Left cardiac atrium (tissue), 4 donors: ENCODE measurements at regions of chr2 and their contacts with region 1.

Region 1: DNA sequence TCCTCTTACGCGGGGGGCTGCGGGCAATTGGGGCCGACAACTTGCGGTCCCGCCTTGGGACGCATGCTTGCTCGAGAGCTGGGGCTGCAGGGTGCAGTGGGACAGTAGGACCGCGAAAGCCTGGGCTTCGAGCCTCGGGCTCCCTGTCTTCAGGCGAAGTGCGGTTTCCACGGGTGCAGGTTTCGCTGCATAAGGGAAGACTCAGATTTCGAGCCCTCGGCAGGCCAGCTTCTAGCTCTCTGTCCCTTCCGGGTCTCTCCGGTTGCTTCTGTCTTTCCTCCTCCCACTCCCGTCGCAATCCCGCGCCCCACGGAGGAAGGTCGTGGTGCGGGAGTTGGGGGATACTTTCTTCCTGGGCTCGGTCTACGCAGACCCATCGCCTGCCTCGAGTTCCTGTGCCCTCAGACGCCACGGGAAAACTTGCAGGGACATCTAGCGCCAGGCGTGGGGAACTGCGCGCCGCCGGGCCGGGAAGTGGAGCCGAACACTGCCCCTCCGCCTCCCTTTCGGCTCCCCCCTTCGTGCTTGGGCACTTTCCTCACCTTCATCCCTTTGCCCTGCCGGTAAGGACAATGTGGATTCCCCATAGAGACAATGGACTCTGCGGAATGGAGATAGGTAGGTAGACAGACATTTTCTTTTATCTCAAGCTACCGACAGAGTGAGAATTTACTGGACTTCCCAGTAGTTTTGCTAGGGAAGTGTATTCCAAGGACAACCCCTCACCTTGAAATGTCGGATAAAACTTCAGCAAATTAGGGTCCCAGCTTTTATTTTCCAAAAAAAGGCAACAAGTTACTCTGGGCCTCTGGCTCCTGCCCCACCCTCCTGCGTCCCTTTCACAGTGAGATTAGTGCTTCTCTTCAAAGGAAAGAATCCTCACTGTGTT is 4.2 kb upstream of the HOXD13 start:
- DNase-seq: peak; percentile 57
- ATAC-seq: peak; percentile 81 to 86

Region 2: DNA sequence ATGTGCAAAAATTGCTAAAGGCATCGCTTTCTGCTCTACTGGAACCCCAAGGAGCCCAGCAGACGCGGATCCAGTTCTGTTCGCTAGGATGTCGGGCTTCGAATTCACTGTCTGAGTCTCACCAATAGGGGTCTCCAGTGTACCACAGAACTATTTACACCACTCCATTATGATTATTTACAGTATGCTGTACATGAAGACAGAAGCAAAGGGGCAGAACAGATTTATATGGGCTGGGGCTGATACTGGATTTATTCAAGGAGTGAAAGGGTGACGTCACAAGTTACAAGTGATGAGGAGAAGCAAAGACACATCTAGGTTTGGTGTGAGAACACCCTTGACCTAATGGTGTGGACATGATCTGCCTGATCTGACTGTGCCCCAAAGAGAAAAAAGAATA is 721.5 kb before region 1 on chr2:
- intact Hi-C with region 1: loop called (anchors 5 to 10 kb)
- DNase-seq: no peak
- ATAC-seq: peak; percentile 53 to 55

Region 3: GRCh38 chr2:175414882-175415487 is 673.3 kb before region 1 on chr2:
- intact Hi-C with region 1: loop called in 1 of 2 experiments (anchors 5 kb)
- DNase-seq: peak; percentile 57
- ATAC-seq: peak; percentile 41 to 71

Region 4: DNA sequence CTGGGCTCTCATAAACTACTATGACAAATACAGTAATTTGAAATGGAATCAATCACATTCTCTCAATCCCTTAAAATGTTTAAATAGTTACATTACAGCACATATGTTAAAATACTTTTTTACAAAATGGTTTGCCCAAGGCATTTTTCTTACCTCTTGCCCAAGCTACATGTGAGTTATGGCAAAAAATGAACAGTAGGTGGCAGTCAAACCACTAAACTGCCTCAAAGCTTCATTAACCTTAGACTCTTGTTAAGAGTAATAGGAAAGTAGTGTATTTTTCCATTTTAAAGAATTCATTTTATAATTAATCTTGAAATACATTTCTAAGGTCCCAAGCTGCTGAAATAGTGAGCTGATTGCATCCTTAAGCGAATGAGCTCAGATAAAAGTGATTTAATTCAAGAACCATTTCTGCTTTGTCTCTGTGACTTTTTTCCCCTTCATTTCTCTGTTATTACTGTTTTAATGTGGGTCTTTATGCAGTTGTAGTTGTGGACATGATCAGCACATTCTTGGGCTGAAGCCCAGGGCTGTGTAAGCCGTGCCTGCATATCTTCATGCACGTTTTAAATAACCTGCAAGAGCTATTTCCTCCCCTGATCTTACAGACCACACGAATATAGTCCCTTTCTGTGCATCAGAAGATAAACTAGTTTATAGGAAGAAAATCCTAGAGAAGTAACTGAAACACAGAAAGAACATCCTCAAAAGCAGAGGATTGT is 398.0 kb before region 1 on chr2:
- intact Hi-C with region 1: loop called (anchors 2 to 5 kb)
- DNase-seq: no peak
- ATAC-seq: peak in 1 of 2 donors; percentile 50